ENCODE measurements at regions of chr7 and their contacts with region 1.

Region 1: GRCh38 chr7:70698219-70698832 is 433.6 kb upstream of the GALNT17 start:
- DNase-seq: peak; percentile 26 to 40
- H3K4me3 ChIP-seq: no peak overlapping the region
- H3K27ac ChIP-seq: no peak overlapping the region
- H3K4me1 ChIP-seq: peaks cover 0 to 3% of the 10 kb centered on the region in 2 donors
- H3K27me3 ChIP-seq: no peaks in the 10 kb centered on the region
- CTCF ChIP-seq: peak; percentile 54 to 93 (median 87)
- POLR2A ChIP-seq: no peak

Region 2: GRCh38 chr7:70052691-70053090 is 645.6 kb before region 1 on chr7:
- intact Hi-C with region 1: loop called (anchors 10 kb)
- DNase-seq: no peak
- H3K4me3 ChIP-seq: no peak overlapping the region
- H3K27ac ChIP-seq: no peak overlapping the region
- H3K4me1 ChIP-seq: no peaks in the 10 kb centered on the region
- H3K27me3 ChIP-seq: no peaks in the 10 kb centered on the region
- CTCF ChIP-seq: no peak
- POLR2A ChIP-seq: no peak

Region 3: DNA sequence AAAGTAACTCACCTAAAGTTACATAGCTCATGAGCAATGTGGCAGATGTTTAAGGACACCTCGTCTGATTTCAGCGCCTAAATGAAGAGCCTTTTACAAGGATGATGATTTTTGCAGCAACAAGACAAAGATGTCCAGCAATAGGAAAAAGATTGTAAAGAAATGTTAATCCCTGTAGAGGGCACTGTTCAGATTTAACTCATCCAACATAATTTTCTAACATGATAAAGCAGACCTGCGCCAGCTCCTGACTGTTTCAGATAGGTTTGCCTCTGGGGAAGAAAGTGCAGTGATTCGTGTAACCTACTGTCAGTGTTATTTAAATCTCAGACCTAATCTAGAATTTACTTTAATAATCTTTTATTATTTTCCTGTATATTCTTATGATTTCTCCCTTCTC is 504.8 kb before region 1 on chr7:
- intact Hi-C with region 1: loop called (anchors 5 kb)
- DNase-seq: peak; percentile 14 to 16
- H3K4me3 ChIP-seq: no peak overlapping the region
- H3K27ac ChIP-seq: no peak overlapping the region
- H3K4me1 ChIP-seq: no peaks in the 10 kb centered on the region
- H3K27me3 ChIP-seq: no peaks in the 10 kb centered on the region
- CTCF ChIP-seq: peak in 3 of 6 experiments; percentile 23 to 39 (median 34)
- POLR2A ChIP-seq: no peak

Region 4: DNA sequence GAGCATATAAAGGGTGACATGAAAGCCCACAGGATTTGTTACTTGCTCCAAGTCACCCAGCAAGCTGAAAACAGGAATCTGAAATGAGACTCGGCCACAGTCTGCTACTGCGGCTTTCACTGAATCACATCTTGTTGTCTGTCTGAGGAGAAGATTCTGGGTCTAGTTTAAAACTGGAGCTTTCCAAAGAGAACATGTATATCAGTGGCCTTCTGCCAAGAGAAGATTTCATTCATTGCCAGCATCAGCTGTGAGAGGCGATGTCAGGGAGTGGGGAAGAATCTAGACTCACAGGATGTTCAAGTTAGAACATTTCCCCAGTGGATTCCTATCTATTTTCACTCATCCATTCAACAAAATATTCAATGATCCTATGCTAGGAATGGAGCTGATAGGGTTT is 556.4 kb after region 1 on chr7:
- intact Hi-C with region 1: no loop called
- DNase-seq: no peak
- H3K4me3 ChIP-seq: no peak overlapping the region
- H3K27ac ChIP-seq: no peak overlapping the region
- H3K4me1 ChIP-seq: no peaks in the 10 kb centered on the region
- H3K27me3 ChIP-seq: no peaks in the 10 kb centered on the region
- CTCF ChIP-seq: no peak
- POLR2A ChIP-seq: no peak